Adrenal gland (tissue), 19 donors: ENCODE measurements at regions of chr2 and their contacts with region 1.

Region 1: GRCh38 chr2:43484323-43484930 is 111.4 kb downstream of the THADA start:
- DNase-seq: no peak
- H3K4me3 ChIP-seq: no peak overlapping the region
- H3K27ac ChIP-seq: peak overlapping the region in 1 of 5 donors; percentile 19
- H3K4me1 ChIP-seq: peaks cover 0 to 58% of the 10 kb centered on the region in 2 donors
- H3K27me3 ChIP-seq: no peaks in the 10 kb centered on the region
- CTCF ChIP-seq: peak; percentile 37 to 91 (median 74)
- POLR2A ChIP-seq: no peak

Region 2: GRCh38 chr2:43239981-43240761 is 244.3 kb before region 1 on chr2:
- intact Hi-C with region 1: loop called in 1 of 2 experiments (anchors 10 kb)
- DNase-seq: no peak
- H3K4me3 ChIP-seq: no peak overlapping the region
- H3K27ac ChIP-seq: peak overlapping the region; percentile 57 to 89 (median 78)
- H3K4me1 ChIP-seq: peaks cover 15 to 22% of the 10 kb centered on the region in 2 donors
- H3K27me3 ChIP-seq: no peaks in the 10 kb centered on the region
- CTCF ChIP-seq: peak in 2 of 6 experiments; percentile 14 to 16
- POLR2A ChIP-seq: no peak